Natural killer cell (primary cell): ENCODE measurements at regions of chr12 and their contacts with region 1.

Region 1: GRCh38 chr12:48183091-48183875 is at the start of gene CCDC184:
- DNase-seq: peak; percentile 63 to 92
- ATAC-seq: peak; percentile 74 to 79 (median 74)
- H3K4me3 ChIP-seq: peak within 1 kb of the TSS; percentile 66
- H3K4me3 Mint-ChIP-seq: peak within 1 kb of the TSS; percentile 91
- H3K27ac ChIP-seq: peak within 1 kb of the TSS; percentile 40
- H3K27ac Mint-ChIP-seq: peak within 1 kb of the TSS; percentile 24 to 89
- H3K4me1 ChIP-seq: peaks cover 18% of the 10 kb centered on the region
- H3K4me1 Mint-ChIP-seq: peaks cover 18 to 23% of the 10 kb centered on the region in 2 donors
- H3K27me3 ChIP-seq: peaks cover 29% of the 10 kb centered on the region
- H3K27me3 Mint-ChIP-seq: peaks cover 48 to 52% of the 10 kb centered on the region in 2 donors
- CTCF ChIP-seq: peak; percentile 52
- total RNA-seq, gene CCDC184: 3.0 to 6.2 (median 4.2) TPM

Region 2: GRCh38 chr12:48017496-48017895 is 165.8 kb before region 1 on chr12:
- intact Hi-C with region 1: no loop called
- DNase-seq: no peak
- ATAC-seq: no peak
- H3K4me3 ChIP-seq: no peak overlapping the region
- H3K4me3 Mint-ChIP-seq: no peak overlapping the region
- H3K27ac ChIP-seq: no peak overlapping the region
- H3K27ac Mint-ChIP-seq: no peak overlapping the region
- H3K4me1 ChIP-seq: no peaks in the 10 kb centered on the region
- H3K4me1 Mint-ChIP-seq: no peaks in the 10 kb centered on the region
- H3K27me3 ChIP-seq: no peaks in the 10 kb centered on the region
- H3K27me3 Mint-ChIP-seq: peaks cover 16 to 45% of the 10 kb centered on the region in 2 donors
- CTCF ChIP-seq: no peak

Region 3: GRCh38 chr12:48084066-48084465 is 99.2 kb before region 1 on chr12:
- intact Hi-C with region 1: no loop called
- DNase-seq: peak in 1 of 2 donors; percentile 34
- ATAC-seq: no peak
- H3K4me3 ChIP-seq: no peak overlapping the region
- H3K4me3 Mint-ChIP-seq: no peak overlapping the region
- H3K27ac ChIP-seq: no peak overlapping the region
- H3K27ac Mint-ChIP-seq: no peak overlapping the region
- H3K4me1 ChIP-seq: no peaks in the 10 kb centered on the region
- H3K4me1 Mint-ChIP-seq: no peaks in the 10 kb centered on the region
- H3K27me3 ChIP-seq: no peaks in the 10 kb centered on the region
- H3K27me3 Mint-ChIP-seq: no peaks in the 10 kb centered on the region
- CTCF ChIP-seq: no peak

Region 4: GRCh38 chr12:48454667-48455066 is 271.4 kb after region 1 on chr12:
- intact Hi-C with region 1: loop called (anchors 10 kb)
- DNase-seq: peak in 1 of 2 donors; percentile 62
- ATAC-seq: peak; percentile 53 to 58 (median 57)
- H3K4me3 ChIP-seq: no peak overlapping the region
- H3K4me3 Mint-ChIP-seq: no peak overlapping the region
- H3K27ac ChIP-seq: no peak overlapping the region
- H3K27ac Mint-ChIP-seq: no peak overlapping the region
- H3K4me1 ChIP-seq: no peaks in the 10 kb centered on the region
- H3K4me1 Mint-ChIP-seq: no peaks in the 10 kb centered on the region
- H3K27me3 ChIP-seq: no peaks in the 10 kb centered on the region
- H3K27me3 Mint-ChIP-seq: peaks cover 13 to 25% of the 10 kb centered on the region in 2 donors
- CTCF ChIP-seq: peak; percentile 48